Activated naive CD4-positive, alpha-beta T cell treated with anti-CD3 and anti-CD28 coated beads, Interleukin-2, amount 10 ng/mL, durations not matched to agents 7 days and 5 days (primary cell): ENCODE measurements at regions of chr16 and their contacts with region 1.

Region 1: DNA sequence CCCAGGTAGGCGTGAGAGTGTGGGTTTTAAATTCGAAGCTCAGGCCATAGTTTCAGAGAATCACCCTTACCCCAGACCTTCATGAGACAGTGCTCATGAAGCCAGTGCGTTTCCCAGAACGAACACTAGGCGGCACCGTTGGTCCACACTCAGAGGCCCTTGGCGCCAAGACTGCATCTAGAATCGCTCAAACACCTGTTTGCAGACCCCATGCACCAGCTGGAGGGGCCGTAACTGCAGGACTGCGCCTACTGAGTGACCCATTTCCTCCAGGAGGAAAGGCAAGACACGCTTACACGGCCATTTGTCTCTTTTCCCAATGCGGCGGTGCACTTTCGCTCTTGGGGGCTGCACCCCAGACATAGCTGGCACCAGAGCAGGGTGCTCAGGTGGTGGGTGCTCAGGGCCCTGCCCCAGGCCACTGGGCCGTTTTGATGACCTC is 34.0 kb downstream of the ADGRG5 start:
- DNase-seq: peak; percentile 90
- H3K4me3 Mint-ChIP-seq: no peak overlapping the region
- H3K27ac Mint-ChIP-seq: peak overlapping the region; percentile 87
- H3K4me1 Mint-ChIP-seq: peaks cover 49% of the 10 kb centered on the region
- H3K27me3 Mint-ChIP-seq: peaks cover 10% of the 10 kb centered on the region

Region 2: DNA sequence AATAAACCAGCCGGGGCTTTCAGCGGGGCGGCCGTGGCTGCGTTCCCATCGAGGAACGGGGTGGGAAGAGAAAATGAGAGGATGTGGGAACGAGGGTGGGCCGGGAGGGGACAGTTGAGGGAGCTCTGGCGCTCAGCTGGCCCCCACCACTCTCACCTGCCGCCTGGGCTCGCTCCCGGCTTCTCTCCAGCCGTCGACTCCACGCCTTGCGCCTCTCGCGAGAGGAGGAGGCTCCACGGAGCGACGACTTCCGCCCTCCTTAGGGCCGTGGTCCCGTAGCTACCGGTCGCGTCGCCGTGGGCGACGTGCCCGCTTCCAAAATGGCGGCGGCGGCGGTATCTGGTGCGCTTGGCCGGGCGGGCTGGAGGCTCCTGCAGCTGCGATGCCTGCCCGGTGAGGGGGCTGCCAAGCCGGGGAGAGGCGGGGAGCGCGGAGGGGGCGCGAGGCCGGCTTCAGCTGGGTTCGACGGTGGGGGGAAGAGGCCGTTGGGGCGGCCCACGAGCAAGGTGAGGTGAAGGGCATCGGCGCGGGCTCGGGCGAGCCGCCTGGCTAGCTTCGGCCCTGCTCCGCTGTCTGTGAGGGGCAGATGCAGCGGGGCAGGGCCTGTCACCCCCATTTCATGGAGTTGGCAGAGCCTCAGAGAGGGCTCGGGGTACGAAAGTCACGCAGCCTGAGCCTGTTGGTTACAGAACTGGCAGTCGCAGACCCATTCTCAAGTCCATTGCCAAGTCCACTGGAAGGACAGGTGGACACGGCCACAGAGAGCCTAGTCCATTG is 129.1 kb before region 1 on chr16 and contains the starts of genes CIAPIN1 and COQ9:
- CTCF ChIA-PET with region 1: no interaction called
- DNase-seq: peak; percentile 97
- H3K4me3 Mint-ChIP-seq: peak within 1 kb of the TSS; percentile 94
- H3K27ac Mint-ChIP-seq: peak within 1 kb of the TSS; percentile 89
- H3K4me1 Mint-ChIP-seq: peaks cover 38% of the 10 kb centered on the region
- H3K27me3 Mint-ChIP-seq: no peaks in the 10 kb centered on the region

Region 3: DNA sequence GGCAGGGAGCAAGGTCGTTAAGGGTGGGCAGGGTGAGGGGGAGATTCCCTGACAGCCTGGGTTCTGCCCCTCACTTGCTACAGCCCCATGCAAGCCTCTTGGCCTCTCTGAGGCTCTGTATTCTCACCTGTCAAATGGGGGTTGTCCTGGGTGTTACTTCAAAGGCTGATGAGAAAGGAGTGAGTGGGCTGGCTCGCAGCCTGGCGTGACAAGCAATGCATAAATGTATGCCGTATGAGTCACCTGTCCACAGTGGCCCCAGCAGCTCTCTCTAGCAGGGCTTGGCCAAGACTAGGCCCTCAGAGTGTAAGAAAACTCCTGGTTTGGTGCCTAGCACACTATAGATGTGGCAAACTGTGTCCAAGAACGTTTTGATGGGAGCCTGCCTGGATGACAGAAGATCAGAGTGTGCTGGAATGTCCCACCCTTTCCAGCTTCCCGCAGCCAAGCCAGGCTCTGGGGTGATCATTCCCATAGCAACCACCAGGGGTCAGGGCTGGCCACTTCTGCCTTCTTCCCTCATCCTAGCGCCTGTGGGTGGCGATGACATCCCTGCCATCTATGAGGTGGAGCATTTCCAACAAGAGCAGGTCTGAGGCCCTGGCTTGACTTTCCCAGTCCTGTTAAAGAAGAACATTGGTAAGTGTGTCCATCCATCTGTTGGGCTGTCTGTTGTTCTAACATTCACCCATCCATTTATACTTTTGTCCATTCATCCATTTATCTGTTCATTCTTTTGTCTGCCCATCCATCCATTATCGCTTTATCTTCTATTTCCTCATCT is 14.8 kb after region 1 on chr16:
- CTCF ChIA-PET with region 1: interaction called, 110 read pairs
- DNase-seq: peak; percentile 80
- H3K4me3 Mint-ChIP-seq: peak overlapping the region; percentile 6
- H3K27ac Mint-ChIP-seq: peak overlapping the region; percentile 87
- H3K4me1 Mint-ChIP-seq: peaks cover 51% of the 10 kb centered on the region
- H3K27me3 Mint-ChIP-seq: peaks cover 24% of the 10 kb centered on the region

Region 4: GRCh38 chr16:57600048-57600835 is 23.8 kb after region 1 on chr16:
- CTCF ChIA-PET with region 1: interaction called, 11 read pairs
- DNase-seq: peak; percentile 51
- H3K4me3 Mint-ChIP-seq: no peak overlapping the region
- H3K27ac Mint-ChIP-seq: peak overlapping the region; percentile 42
- H3K4me1 Mint-ChIP-seq: peaks cover 58% of the 10 kb centered on the region
- H3K27me3 Mint-ChIP-seq: peaks cover 7% of the 10 kb centered on the region

Region 5: GRCh38 chr16:57609541-57610401 is 33.3 kb after region 1 on chr16:
- CTCF ChIA-PET with region 1: interaction called, 33 read pairs
- DNase-seq: peak; percentile 83
- H3K4me3 Mint-ChIP-seq: peak overlapping the region; percentile 46
- H3K27ac Mint-ChIP-seq: peak overlapping the region; percentile 86
- H3K4me1 Mint-ChIP-seq: peaks cover 49% of the 10 kb centered on the region
- H3K27me3 Mint-ChIP-seq: peaks cover 5% of the 10 kb centered on the region

Region 6: GRCh38 chr16:58000706-58001676 is 424.5 kb after region 1 on chr16 and contains the start of gene USB1:
- CTCF ChIA-PET with region 1: interaction called, 10 read pairs
- DNase-seq: peak; percentile 85
- H3K4me3 Mint-ChIP-seq: peak within 1 kb of the TSS; percentile 90
- H3K27ac Mint-ChIP-seq: peak within 1 kb of the TSS; percentile 87
- H3K4me1 Mint-ChIP-seq: peaks cover 62% of the 10 kb centered on the region
- H3K27me3 Mint-ChIP-seq: no peaks in the 10 kb centered on the region